ENCODE measurements at regions of chr12 and their contacts with region 1.

Region 1: GRCh38 chr12:119176267-119176849 is 2.4 kb upstream of the HSPB8 start:
- DNase-seq: peak; percentile 95 to 98
- ATAC-seq: peak; percentile 57 to 64
- H3K4me3 ChIP-seq: peak overlapping the region; percentile 24 to 61 (median 44)
- H3K27ac ChIP-seq: peak overlapping the region; percentile 97 to 100 (median 98)
- H3K4me1 ChIP-seq: peaks cover 27 to 29% of the 10 kb centered on the region in 2 donors
- H3K27me3 ChIP-seq: no peaks in the 10 kb centered on the region
- CTCF ChIP-seq: no peak
- POLR2A ChIP-seq: peak; percentile 81 to 83

Region 2: GRCh38 chr12:117533704-117534103 is 1642.7 kb before region 1 on chr12:
- in situ Hi-C with region 1: no loop called
- intact Hi-C with region 1: loop called (anchors 5 kb)
- DNase-seq: peak; percentile 94 to 97
- ATAC-seq: peak; percentile 92 to 96
- H3K4me3 ChIP-seq: no peak overlapping the region
- H3K27ac ChIP-seq: peak overlapping the region; percentile 89 to 93 (median 92)
- H3K4me1 ChIP-seq: peaks cover 22 to 26% of the 10 kb centered on the region in 2 donors
- H3K27me3 ChIP-seq: no peaks in the 10 kb centered on the region
- CTCF ChIP-seq: no peak
- POLR2A ChIP-seq: peak; percentile 32 to 42

Region 3: DNA sequence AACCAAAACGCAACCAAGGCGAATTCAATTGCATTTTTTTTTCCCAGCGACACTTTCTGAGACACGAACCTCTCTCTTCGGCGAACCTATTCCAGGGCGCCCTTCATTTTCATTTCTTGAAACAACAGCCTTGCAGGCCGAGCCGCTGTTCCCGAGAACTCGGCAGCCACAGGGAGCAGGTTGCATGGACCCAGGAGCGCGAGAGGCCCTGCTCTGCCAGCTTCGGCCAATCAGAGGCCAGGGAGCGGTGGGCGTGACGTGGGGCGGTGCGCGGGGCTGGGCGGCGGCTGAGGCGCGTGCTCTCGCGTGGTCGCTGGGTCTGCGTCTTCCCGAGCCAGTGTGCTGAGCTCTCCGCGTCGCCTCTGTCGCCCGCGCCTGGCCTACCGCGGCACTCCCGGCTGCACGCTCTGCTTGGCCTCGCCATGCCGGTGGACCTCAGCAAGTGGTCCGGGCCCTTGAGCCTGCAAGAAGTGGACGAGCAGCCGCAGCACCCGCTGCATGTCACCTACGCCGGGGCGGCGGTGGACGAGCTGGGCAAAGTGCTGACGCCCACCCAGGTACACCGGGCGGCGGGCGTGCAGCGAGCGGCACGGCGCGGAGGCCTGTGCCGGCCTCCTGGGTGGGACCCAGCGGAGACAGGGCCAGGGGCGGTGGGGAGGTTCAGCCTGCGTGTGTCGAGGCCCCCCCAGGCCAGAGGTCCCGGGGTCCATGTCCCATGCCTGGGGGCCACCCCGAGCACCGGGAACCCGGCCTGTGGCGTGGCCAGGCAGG is 1040.4 kb before region 1 on chr12 and contains the start of gene PEBP1:
- in situ Hi-C with region 1: no loop called
- intact Hi-C with region 1: loop called (anchors 10 kb)
- DNase-seq: peak; percentile 94 to 95
- ATAC-seq: peak; percentile 81 to 91
- H3K4me3 ChIP-seq: peak within 1 kb of the TSS; percentile 75 to 94 (median 92)
- H3K27ac ChIP-seq: peak within 1 kb of the TSS; percentile 91 to 97 (median 96)
- H3K4me1 ChIP-seq: peaks cover 14 to 37% of the 10 kb centered on the region in 2 donors
- H3K27me3 ChIP-seq: no peaks in the 10 kb centered on the region
- CTCF ChIP-seq: peak in 1 of 5 experiments; percentile 27
- POLR2A ChIP-seq: peak; percentile 92 to 93
- total RNA-seq, gene PEBP1: 306 to 442 (median 330) TPM

Region 4: DNA sequence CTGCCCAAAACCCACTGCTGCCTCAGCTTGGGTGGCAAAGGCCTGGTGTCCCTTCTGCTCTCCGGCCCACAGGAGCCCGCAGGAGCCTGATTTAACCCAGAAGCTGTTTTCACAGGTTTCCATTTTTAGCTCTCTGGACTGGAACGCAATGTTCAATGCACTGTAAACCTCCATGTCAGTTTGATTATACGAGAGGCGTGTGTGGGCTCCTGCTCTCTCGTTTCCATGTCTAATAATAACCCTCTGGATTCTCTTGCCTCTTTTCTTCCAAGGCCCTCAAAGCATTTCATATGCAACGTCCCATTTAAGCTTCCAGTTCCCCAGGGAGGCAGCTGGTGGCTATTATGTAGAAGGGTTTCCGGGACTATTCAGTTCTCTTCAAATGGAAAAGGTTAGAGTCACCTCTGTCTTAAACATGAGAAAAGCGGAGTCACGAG is 638.9 kb before region 1 on chr12:
- in situ Hi-C with region 1: no loop called
- intact Hi-C with region 1: loop called (anchors 10 kb)
- DNase-seq: peak; percentile 71 to 87
- ATAC-seq: peak; percentile 96 to 98
- H3K4me3 ChIP-seq: peak overlapping the region in 1 of 4 donors; percentile 3
- H3K27ac ChIP-seq: peak overlapping the region; percentile 97 to 99 (median 98)
- H3K4me1 ChIP-seq: peaks cover 24% of the 10 kb centered on the region in 2 donors
- H3K27me3 ChIP-seq: no peaks in the 10 kb centered on the region
- CTCF ChIP-seq: no peak
- POLR2A ChIP-seq: peak; percentile 26 to 77

Region 5: DNA sequence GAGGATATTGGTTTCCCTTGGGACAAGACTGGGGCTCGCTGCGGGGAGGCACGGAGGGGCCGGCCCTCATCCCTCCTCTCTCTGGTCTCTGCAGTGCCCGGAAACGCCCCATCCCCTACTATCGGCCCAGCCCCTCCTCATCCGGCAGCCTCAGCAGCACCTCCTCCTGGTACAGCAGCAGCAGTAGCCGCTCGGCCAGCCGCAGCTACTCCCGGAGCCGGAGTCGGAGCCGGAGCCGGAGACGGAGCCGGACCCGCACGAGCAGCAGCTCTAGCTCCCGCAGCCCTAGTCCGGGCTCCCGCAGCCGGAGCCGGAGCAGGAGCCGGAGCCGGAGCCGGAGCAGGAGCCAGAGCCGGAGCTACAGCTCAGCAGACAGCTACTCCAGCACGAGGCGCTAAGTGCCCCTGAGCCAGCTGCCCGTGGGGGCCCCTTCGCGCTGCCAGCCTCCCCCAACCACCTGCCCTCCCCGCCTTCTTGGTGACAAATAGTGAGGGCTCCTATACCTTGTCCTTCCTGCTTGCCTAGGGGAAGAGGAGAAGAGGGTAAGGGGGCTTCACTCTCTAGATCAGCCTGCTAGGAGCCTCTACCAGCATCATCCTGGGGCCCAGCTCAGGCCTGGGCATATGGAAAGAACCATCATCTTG is 19.8 kb before region 1 on chr12:
- in situ Hi-C with region 1: no loop called
- intact Hi-C with region 1: loop called (anchors 1 kb)
- DNase-seq: peak in 1 of 2 donors; percentile 30
- ATAC-seq: no peak
- H3K4me3 ChIP-seq: no peak overlapping the region
- H3K27ac ChIP-seq: peak overlapping the region; percentile 93 to 99 (median 95)
- H3K4me1 ChIP-seq: peaks cover 43 to 46% of the 10 kb centered on the region in 2 donors
- H3K27me3 ChIP-seq: no peaks in the 10 kb centered on the region
- CTCF ChIP-seq: peak in 1 of 5 experiments; percentile 23
- POLR2A ChIP-seq: no peak

Region 6: GRCh38 chr12:119208622-119209061 is 32.3 kb after region 1 on chr12:
- in situ Hi-C with region 1: no loop called
- intact Hi-C with region 1: loop called (anchors 2 kb)
- DNase-seq: peak; percentile 55 to 89
- ATAC-seq: peak; percentile 80 to 86
- H3K4me3 ChIP-seq: no peak overlapping the region
- H3K27ac ChIP-seq: peak overlapping the region in 3 of 4 donors; percentile 51 to 71 (median 60)
- H3K4me1 ChIP-seq: peaks cover 22 to 36% of the 10 kb centered on the region in 2 donors
- H3K27me3 ChIP-seq: no peaks in the 10 kb centered on the region
- CTCF ChIP-seq: no peak
- POLR2A ChIP-seq: peak; percentile 23 to 28

Measured in gastrocnemius medialis (tissue), 4 donors.